ENCODE measurements at regions of chr6 and their contacts with region 1.

Region 1: GRCh38 chr6:149075616-149076364 is 241.7 kb upstream of the TAB2 start:
- DNase-seq: peak; percentile 51
- H3K4me3 Mint-ChIP-seq: peak overlapping the region; percentile 7
- H3K27ac Mint-ChIP-seq: peak overlapping the region; percentile 93
- H3K4me1 Mint-ChIP-seq: peaks cover 40% of the 10 kb centered on the region
- H3K27me3 Mint-ChIP-seq: no peaks in the 10 kb centered on the region

Region 2: GRCh38 chr6:148487461-148487860 is 588.3 kb before region 1 on chr6:
- CTCF ChIA-PET with region 1: no interaction called
- POLR2A ChIA-PET with region 1: no interaction called
- intact Hi-C with region 1: no loop called
- DNase-seq: no peak
- H3K4me3 Mint-ChIP-seq: no peak overlapping the region
- H3K27ac Mint-ChIP-seq: no peak overlapping the region
- H3K4me1 Mint-ChIP-seq: no peaks in the 10 kb centered on the region
- H3K27me3 Mint-ChIP-seq: peaks cover 6% of the 10 kb centered on the region

Region 3: DNA sequence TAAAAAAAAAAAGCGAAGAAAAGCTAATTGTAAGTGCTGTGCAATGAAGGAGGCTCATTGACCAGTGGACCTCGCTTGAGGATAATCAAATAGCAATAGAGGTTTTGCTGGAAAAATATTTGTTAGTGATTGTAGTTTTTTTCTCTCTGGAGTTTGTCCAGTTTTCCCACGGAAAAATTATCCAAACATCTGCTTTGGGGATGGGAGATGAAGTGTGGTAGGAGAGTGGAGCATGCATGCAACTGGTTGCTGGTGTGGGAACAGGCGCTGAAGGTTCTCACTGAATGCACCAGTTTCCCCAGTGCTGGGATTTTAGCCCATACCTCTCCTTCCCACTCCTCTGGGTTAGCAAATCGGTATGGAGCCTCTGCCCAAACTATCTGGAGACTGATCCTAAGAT is 40.0 kb before region 1 on chr6:
- CTCF ChIA-PET with region 1: interaction called, 29 read pairs
- POLR2A ChIA-PET with region 1: interaction called, 62 read pairs
- intact Hi-C with region 1: loop called (anchors 1 kb)
- DNase-seq: no peak
- H3K4me3 Mint-ChIP-seq: no peak overlapping the region
- H3K27ac Mint-ChIP-seq: no peak overlapping the region
- H3K4me1 Mint-ChIP-seq: peaks cover 82% of the 10 kb centered on the region
- H3K27me3 Mint-ChIP-seq: no peaks in the 10 kb centered on the region

Region 4: GRCh38 chr6:149060300-149060997 is 15.3 kb before region 1 on chr6:
- CTCF ChIA-PET with region 1: interaction called, 4 read pairs
- POLR2A ChIA-PET with region 1: interaction called, 19 read pairs
- intact Hi-C with region 1: loop called (anchors 2 kb)
- DNase-seq: peak; percentile 80
- H3K4me3 Mint-ChIP-seq: peak overlapping the region; percentile 68
- H3K27ac Mint-ChIP-seq: peak overlapping the region; percentile 91
- H3K4me1 Mint-ChIP-seq: peaks cover 58% of the 10 kb centered on the region
- H3K27me3 Mint-ChIP-seq: no peaks in the 10 kb centered on the region